ENCODE measurements at regions of chr2 and their contacts with region 1.

Region 1: DNA sequence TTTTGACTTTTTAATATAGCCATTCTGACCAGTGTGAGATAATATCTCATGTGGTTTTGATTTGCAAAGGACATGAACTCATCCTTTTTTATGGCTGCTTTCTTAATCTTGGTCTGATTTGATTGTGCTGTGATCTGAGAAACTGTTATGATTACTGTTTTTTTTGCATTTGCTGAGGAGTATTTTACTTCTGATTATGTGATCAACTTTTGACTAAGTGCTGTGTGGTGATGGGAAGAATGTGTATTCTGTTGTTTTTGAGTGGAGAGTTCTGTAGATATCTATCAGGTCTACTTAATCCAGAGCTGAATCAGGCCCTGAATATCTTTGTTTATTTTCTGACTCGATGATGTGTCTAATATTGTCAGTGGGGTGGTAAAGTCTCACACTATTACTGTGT is 16.8 kb downstream of the SP140L start:
- DNase-seq: no peak
- H3K4me3 ChIP-seq: no peak overlapping the region
- H3K4me3 Mint-ChIP-seq: no peak overlapping the region
- H3K27ac ChIP-seq: no peak overlapping the region
- H3K27ac Mint-ChIP-seq: no peak overlapping the region
- H3K4me1 ChIP-seq: peaks cover 5% of the 10 kb centered on the region in 2 donors
- H3K4me1 Mint-ChIP-seq: peaks cover 17% of the 10 kb centered on the region
- H3K27me3 ChIP-seq: no peaks in the 10 kb centered on the region
- H3K27me3 Mint-ChIP-seq: peaks cover 0 to 2% (median 0%) of the 10 kb centered on the region in 3 donors
- CTCF ChIP-seq: no peak

Region 2: GRCh38 chr2:230053753-230054478 is 289.8 kb before region 1 on chr2:
- intact Hi-C with region 1: no loop called
- DNase-seq: no peak
- H3K4me3 ChIP-seq: no peak overlapping the region
- H3K4me3 Mint-ChIP-seq: no peak overlapping the region
- H3K27ac ChIP-seq: no peak overlapping the region
- H3K27ac Mint-ChIP-seq: no peak overlapping the region
- H3K4me1 ChIP-seq: no peaks in the 10 kb centered on the region
- H3K4me1 Mint-ChIP-seq: peaks cover 2% of the 10 kb centered on the region
- H3K27me3 ChIP-seq: no peaks in the 10 kb centered on the region
- H3K27me3 Mint-ChIP-seq: no peaks in the 10 kb centered on the region
- CTCF ChIP-seq: no peak

Region 3: DNA sequence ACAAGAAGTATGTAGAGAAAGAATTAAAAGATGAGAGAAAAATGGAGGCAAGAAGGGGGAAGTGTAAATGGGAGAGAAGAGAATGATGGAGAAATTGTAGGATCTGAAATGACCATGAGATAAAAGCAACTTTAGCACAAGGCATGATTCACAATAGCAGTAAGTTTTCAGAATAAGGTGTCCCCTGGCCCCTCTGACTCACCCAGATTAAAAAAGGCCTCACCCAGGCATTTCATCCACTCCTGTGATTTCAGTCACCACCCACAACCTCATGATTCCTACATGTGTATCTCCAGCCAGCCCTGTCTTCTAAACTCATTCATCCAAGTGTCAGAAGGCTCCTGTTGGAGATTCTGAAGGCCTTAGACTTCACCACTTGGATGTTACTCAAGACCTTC is 128.9 kb after region 1 on chr2:
- intact Hi-C with region 1: loop called in 1 of 2 experiments (anchors 5 kb)
- DNase-seq: peak; percentile 58 to 90 (median 88)
- H3K4me3 ChIP-seq: no peak overlapping the region
- H3K4me3 Mint-ChIP-seq: no peak overlapping the region
- H3K27ac ChIP-seq: peak overlapping the region in 1 of 2 donors; percentile 67
- H3K27ac Mint-ChIP-seq: peak overlapping the region; percentile 65 to 93 (median 84)
- H3K4me1 ChIP-seq: peaks cover 22 to 26% of the 10 kb centered on the region in 2 donors
- H3K4me1 Mint-ChIP-seq: peaks cover 23% of the 10 kb centered on the region
- H3K27me3 ChIP-seq: no peaks in the 10 kb centered on the region
- H3K27me3 Mint-ChIP-seq: no peaks in the 10 kb centered on the region
- CTCF ChIP-seq: no peak

Measured in CD14-positive monocyte (primary cell).